A549 (cell line): ENCODE measurements at regions of chr2 and their contacts with region 1.

Region 1: GRCh38 chr2:24084386-24085361 is at the start of gene TP53I3:
- DNase-seq: peak; percentile 95 to 97
- ATAC-seq: peak; percentile 86 to 93
- H3K4me3 ChIP-seq: peak within 1 kb of the TSS; percentile 65
- H3K27ac ChIP-seq: peak within 1 kb of the TSS; percentile 91 to 97
- H3K4me1 ChIP-seq: peaks cover 27% of the 10 kb centered on the region
- CTCF ChIP-seq: peak; percentile 98
- EP300 ChIP-seq: no peak
- POLR2A ChIP-seq: peak; percentile 90
- RAD21 ChIP-seq: peak; percentile 75 to 95
- polyA plus RNA-seq, gene TP53I3: 93.7 and 99.1 TPM in 2 replicates

Region 2: DNA sequence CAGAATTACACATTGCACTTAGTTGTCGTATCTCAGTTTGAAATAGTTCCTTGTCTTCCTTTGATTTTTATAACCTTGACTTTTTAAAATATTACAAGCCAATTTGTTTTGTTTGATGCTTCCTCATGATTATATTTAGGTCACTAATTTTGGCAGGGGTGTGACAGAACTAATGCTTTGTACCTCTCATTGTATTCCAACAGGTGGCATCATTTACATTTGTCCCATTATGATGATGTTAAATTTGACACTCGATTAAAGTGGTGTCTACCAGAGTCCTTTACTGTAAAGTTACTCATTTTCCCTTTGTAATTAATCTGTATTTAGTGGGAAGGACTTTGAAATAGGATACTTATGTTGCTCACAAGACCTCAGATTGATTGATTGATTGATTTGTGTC is 96.3 kb before region 1 on chr2:
- CTCF ChIA-PET with region 1: interaction called, 19 read pairs
- POLR2A ChIA-PET with region 1: no interaction called
- DNase-seq: peak; percentile 48 to 53
- ATAC-seq: peak; percentile 83 to 87
- H3K4me3 ChIP-seq: no peak overlapping the region
- H3K27ac ChIP-seq: no peak overlapping the region
- H3K4me1 ChIP-seq: peaks cover 10% of the 10 kb centered on the region
- CTCF ChIP-seq: peak; percentile 86
- EP300 ChIP-seq: no peak
- POLR2A ChIP-seq: no peak
- RAD21 ChIP-seq: peak; percentile 80 to 85

Region 3: GRCh38 chr2:24058564-24059271 is 26.0 kb before region 1 on chr2:
- CTCF ChIA-PET with region 1: interaction called, 55 read pairs
- POLR2A ChIA-PET with region 1: interaction called, 4 read pairs
- DNase-seq: no peak
- ATAC-seq: peak in 1 of 2 experiments; percentile 25; a peak in 2 of 6 replicates
- H3K4me3 ChIP-seq: no peak overlapping the region
- H3K27ac ChIP-seq: no peak overlapping the region
- H3K4me1 ChIP-seq: peaks cover 7% of the 10 kb centered on the region; the same call in 1 of the 3 replicates
- CTCF ChIP-seq: no peak
- EP300 ChIP-seq: no peak
- POLR2A ChIP-seq: no peak
- RAD21 ChIP-seq: no peak

Region 4: GRCh38 chr2:24117902-24118301 is 33.2 kb after region 1 on chr2:
- CTCF ChIA-PET with region 1: interaction called, 75 read pairs
- POLR2A ChIA-PET with region 1: interaction called, 78 read pairs
- DNase-seq: no peak
- ATAC-seq: no peak
- H3K4me3 ChIP-seq: no peak overlapping the region
- H3K27ac ChIP-seq: no peak overlapping the region
- H3K4me1 ChIP-seq: peaks cover 16% of the 10 kb centered on the region; the same call in 2 of the 3 replicates
- CTCF ChIP-seq: no peak
- EP300 ChIP-seq: no peak
- POLR2A ChIP-seq: no peak
- RAD21 ChIP-seq: no peak

Region 5: GRCh38 chr2:24174851-24175277 is 90.2 kb after region 1 on chr2 and contains the start of gene FAM228A:
- CTCF ChIA-PET with region 1: interaction called, 17 read pairs
- POLR2A ChIA-PET with region 1: no interaction called
- DNase-seq: no peak
- ATAC-seq: no peak
- H3K4me3 ChIP-seq: no peak within 1 kb of the TSS
- H3K27ac ChIP-seq: no peak within 1 kb of the TSS
- H3K4me1 ChIP-seq: no peaks in the 10 kb centered on the region
- CTCF ChIP-seq: no peak
- EP300 ChIP-seq: no peak
- POLR2A ChIP-seq: no peak
- RAD21 ChIP-seq: no peak
- polyA plus RNA-seq, gene FAM228A: 0.13 TPM in 1 of 2 replicates, not detected in the other

Region 6: DNA sequence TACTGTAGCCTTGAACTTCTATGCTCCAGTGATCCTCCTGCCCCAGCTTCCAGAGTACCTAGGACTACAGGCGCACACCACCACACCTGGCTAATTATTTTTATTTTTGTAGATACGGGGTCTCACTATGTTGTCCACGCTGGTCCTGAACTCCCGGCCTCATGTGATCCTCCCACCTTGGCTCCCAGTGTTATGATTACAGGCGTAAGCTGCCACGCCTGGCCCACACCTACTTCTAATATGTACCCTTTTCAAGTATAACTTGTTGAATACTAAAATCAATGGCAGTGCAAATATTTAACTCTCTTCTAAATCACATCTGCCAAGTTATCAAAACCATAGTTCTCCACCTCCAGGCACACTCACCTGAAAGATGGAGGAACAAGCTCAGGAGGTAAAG is 216.9 kb after region 1 on chr2:
- CTCF ChIA-PET with region 1: no interaction called
- POLR2A ChIA-PET with region 1: no interaction called
- DNase-seq: no peak
- ATAC-seq: no peak
- H3K4me3 ChIP-seq: no peak overlapping the region
- H3K27ac ChIP-seq: no peak overlapping the region
- H3K4me1 ChIP-seq: no peaks in the 10 kb centered on the region
- CTCF ChIP-seq: no peak
- EP300 ChIP-seq: no peak
- POLR2A ChIP-seq: no peak
- RAD21 ChIP-seq: no peak

Region 7: GRCh38 chr2:24375349-24376087 is 290.8 kb after region 1 on chr2:
- CTCF ChIA-PET with region 1: interaction called, 25 read pairs
- POLR2A ChIA-PET with region 1: no interaction called
- DNase-seq: no peak
- ATAC-seq: peak in 1 of 2 experiments; percentile 32; a peak in 2 of 6 replicates
- H3K4me3 ChIP-seq: no peak overlapping the region
- H3K27ac ChIP-seq: no peak overlapping the region
- H3K4me1 ChIP-seq: no peaks in the 10 kb centered on the region
- CTCF ChIP-seq: no peak
- EP300 ChIP-seq: no peak
- POLR2A ChIP-seq: no peak
- RAD21 ChIP-seq: no peak